T-cell (primary cell): ENCODE measurements at regions of chr16 and their contacts with region 1.

Region 1: GRCh38 chr16:8607214-8607613 is 14.3 kb upstream of the METTL22 start:
- DNase-seq: no peak
- ATAC-seq: no peak
- H3K4me3 ChIP-seq: no peak overlapping the region
- H3K4me3 Mint-ChIP-seq: no peak overlapping the region
- H3K27ac ChIP-seq: no peak overlapping the region
- H3K27ac Mint-ChIP-seq: no peak overlapping the region
- H3K4me1 ChIP-seq: no peaks in the 10 kb centered on the region
- H3K4me1 Mint-ChIP-seq: no peaks in the 10 kb centered on the region
- H3K27me3 ChIP-seq: peaks cover 0 to 14% of the 10 kb centered on the region in 2 experiments
- H3K27me3 Mint-ChIP-seq: peaks cover 15 to 22% of the 10 kb centered on the region in 2 donors

Region 2: DNA sequence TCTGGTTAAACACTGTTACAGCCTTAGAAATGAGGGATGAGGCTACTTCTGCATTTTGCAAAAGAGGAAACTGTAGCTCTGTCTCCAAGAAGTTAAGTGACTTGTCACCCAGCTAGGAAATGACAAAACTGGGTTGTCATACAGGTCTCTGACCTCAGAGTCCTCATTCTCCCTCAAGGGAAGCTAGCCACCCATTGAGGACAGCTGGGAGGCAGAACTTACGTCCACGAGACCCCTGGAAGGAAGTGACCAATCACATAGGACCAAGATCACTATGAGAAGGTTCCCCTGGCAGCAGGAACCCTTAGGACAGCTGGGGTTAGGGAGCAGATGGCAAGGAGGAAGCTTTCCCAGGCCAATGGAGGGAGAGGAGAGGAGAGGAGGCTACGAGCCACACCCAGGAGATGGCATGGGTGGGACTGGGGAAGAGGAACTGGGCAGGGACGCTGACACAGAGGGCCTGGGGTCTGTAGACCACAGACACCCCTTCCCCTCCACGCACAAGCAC is 25.5 kb after region 1 on chr16:
- CTCF ChIA-PET with region 1: no interaction called
- POLR2A ChIA-PET with region 1: interaction called in 1 of 2 experiments, 11 read pairs
- DNase-seq: peak in 1 of 35 experiments; percentile 32
- ATAC-seq: no peak
- H3K4me3 ChIP-seq: no peak overlapping the region
- H3K4me3 Mint-ChIP-seq: no peak overlapping the region
- H3K27ac ChIP-seq: no peak overlapping the region
- H3K27ac Mint-ChIP-seq: no peak overlapping the region
- H3K4me1 ChIP-seq: no peaks in the 10 kb centered on the region
- H3K4me1 Mint-ChIP-seq: no peaks in the 10 kb centered on the region
- H3K27me3 ChIP-seq: no peaks in the 10 kb centered on the region
- H3K27me3 Mint-ChIP-seq: no peaks in the 10 kb centered on the region